Left colon (tissue), 2 donors: ENCODE measurements at regions of chr4 and their contacts with region 1.

Region 1: GRCh38 chr4:140439644-140440142 is 12.2 kb upstream of the CLGN start:
- DNase-seq: no peak
- ATAC-seq: no peak

Region 2: DNA sequence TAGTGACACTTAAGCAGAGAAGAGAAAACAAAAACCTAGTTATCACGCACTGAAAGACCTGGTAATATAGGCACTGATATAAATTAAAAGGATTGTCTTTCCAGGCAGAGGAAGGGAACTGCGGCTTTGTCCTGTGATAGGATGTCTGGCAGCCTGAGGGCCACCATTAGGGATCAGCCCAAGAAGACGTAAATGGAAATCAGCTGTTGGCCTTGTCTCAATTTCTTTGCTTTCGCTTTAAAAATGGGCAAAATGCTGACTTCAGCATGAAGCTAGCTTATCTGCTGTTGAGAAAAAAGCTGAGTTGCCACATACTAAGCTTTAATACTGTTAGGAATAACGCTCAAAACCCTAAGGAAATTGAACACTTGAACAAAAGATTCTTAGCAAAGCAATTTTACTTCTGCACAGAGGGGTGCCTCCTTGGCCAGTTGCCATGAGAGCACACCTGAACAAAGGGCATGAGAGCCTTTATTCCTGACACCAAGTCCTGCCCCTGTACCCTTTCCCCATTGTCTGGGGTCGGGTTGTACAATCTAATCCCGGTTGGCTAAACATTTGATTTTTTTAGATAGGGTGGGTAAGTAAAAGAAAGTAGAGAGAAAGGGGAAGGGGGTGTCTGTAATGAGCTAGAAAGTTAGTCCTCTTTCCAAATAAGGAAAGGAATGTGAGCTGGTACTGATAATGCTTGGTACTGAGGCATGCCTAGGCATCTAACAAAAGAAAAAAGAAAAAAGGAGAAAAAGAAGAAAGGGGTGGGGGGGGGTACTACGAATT is 214.2 kb after region 1 on chr4:
- intact Hi-C with region 1: loop called in 1 of 2 experiments (anchors 10 kb)
- DNase-seq: no peak
- ATAC-seq: no peak